SK-N-SH (cell line): ENCODE measurements at regions of chr1 and their contacts with region 1.

Region 1: GRCh38 chr1:199551967-199552565 is 475.4 kb upstream of the NR5A2 start:
- DNase-seq: peak; percentile 47
- H3K4me3 ChIP-seq: no peak overlapping the region
- H3K27ac ChIP-seq: no peak overlapping the region
- H3K4me1 ChIP-seq: peaks cover 0 to 11% of the 10 kb centered on the region in 2 experiments; a peak in 3 of 4 replicates
- H3K27me3 ChIP-seq: no peaks in the 10 kb centered on the region
- CTCF ChIP-seq: peak; percentile 96
- EP300 ChIP-seq: no peak
- RAD21 ChIP-seq: peak; percentile 93

Region 2: DNA sequence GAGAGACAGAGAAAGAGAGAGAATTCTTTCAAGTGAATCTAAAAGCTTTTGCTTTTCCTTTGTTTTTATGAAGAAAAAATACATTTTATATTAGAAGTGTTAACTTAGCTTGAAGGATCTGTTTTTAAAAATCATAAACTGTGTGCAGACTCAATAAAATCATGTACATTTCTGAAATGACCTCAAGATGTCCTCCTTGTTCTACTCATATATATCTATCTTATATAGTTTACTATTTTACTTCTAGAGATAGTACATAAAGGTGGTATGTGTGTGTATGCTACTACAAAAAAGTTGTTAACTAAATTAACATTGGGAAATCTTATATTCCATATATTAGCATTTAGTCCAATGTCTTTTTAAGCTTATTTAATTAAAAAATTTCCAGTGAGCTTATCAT is 795.6 kb before region 1 on chr1:
- CTCF ChIA-PET with region 1: interaction called, 77 read pairs
- POLR2A ChIA-PET with region 1: no interaction called
- DNase-seq: no peak
- H3K4me3 ChIP-seq: no peak overlapping the region
- H3K27ac ChIP-seq: no peak overlapping the region
- H3K4me1 ChIP-seq: no peaks in the 10 kb centered on the region; a peak in 1 of 4 replicates
- H3K27me3 ChIP-seq: no peaks in the 10 kb centered on the region
- CTCF ChIP-seq: peak; percentile 60
- EP300 ChIP-seq: no peak
- RAD21 ChIP-seq: peak; percentile 60

Region 3: DNA sequence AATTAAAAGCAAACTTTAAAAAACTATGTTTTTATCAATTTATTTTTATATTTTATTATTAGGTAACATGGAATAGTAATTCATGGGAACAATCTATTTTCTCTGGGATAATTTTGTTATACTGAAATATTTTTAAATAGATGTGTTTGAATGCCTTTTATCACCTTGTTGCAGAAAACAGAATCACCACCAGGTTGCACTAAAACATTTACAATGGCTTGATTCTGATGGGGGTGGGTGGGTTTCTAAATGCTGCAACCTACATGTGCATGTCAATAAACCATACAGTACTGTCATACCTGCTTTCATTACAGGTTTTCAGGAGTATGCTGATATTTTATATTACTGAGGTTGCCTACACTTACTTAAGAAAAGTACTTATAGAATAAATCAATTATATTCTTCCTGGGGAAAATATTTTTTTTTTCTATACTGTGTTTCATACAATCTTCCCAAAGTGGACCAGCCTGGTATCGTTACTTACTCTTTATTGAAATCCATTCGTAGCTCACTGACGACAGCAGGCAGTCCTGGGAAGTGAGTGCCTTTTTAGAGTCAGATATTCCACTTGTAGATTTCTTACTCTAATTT is 780.4 kb before region 1 on chr1:
- CTCF ChIA-PET with region 1: interaction called, 77 read pairs
- POLR2A ChIA-PET with region 1: no interaction called
- DNase-seq: peak; percentile 32
- H3K4me3 ChIP-seq: no peak overlapping the region
- H3K27ac ChIP-seq: no peak overlapping the region
- H3K4me1 ChIP-seq: peaks cover 0 to 20% of the 10 kb centered on the region in 2 experiments; a peak in 2 of 4 replicates
- H3K27me3 ChIP-seq: no peaks in the 10 kb centered on the region
- CTCF ChIP-seq: peak; percentile 76
- EP300 ChIP-seq: no peak
- RAD21 ChIP-seq: peak; percentile 90

Region 4: DNA sequence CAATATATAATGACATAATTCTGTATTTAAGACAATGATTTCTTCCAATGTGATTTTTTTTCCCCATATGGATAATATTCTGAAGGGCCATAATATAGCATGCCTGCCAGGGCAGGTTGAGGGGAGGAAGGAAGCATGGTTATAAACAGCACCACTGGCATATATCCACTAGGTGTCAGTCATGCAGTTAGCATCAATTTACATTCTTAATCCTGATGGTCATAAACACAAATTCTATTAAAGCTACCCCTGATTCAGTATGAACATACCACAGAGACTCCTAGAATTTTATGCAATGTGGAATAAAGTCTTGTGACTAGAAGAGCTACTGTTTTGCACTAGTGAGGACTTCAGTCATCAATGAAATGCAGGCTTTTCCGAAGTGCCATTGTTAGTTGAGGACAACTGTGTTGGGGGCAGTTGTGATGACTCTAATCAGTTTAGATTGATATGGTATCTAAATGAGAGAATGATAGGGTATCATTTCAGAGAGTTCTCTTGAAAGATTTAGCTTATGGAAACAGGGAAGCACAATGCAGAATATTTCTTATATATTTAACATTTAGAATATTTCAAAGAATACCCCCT is 132.7 kb after region 1 on chr1:
- CTCF ChIA-PET with region 1: no interaction called
- POLR2A ChIA-PET with region 1: no interaction called
- DNase-seq: peak; percentile 46
- H3K4me3 ChIP-seq: no peak overlapping the region; a peak in 1 of 4 replicates
- H3K27ac ChIP-seq: no peak overlapping the region
- H3K4me1 ChIP-seq: peaks cover 2 to 16% of the 10 kb centered on the region in 2 experiments; a peak in 2 of 4 replicates
- H3K27me3 ChIP-seq: no peaks in the 10 kb centered on the region
- CTCF ChIP-seq: peak; percentile 92
- EP300 ChIP-seq: no peak
- RAD21 ChIP-seq: peak; percentile 93

Region 5: GRCh38 chr1:199931653-199932377 is 379.7 kb after region 1 on chr1:
- CTCF ChIA-PET with region 1: no interaction called
- POLR2A ChIA-PET with region 1: no interaction called
- DNase-seq: no peak
- H3K4me3 ChIP-seq: no peak overlapping the region
- H3K27ac ChIP-seq: no peak overlapping the region
- H3K4me1 ChIP-seq: no peaks in the 10 kb centered on the region
- H3K27me3 ChIP-seq: no peaks in the 10 kb centered on the region
- CTCF ChIP-seq: no peak
- EP300 ChIP-seq: no peak
- RAD21 ChIP-seq: no peak